ENCODE measurements at regions of chr20 and their contacts with region 1.

Region 1: DNA sequence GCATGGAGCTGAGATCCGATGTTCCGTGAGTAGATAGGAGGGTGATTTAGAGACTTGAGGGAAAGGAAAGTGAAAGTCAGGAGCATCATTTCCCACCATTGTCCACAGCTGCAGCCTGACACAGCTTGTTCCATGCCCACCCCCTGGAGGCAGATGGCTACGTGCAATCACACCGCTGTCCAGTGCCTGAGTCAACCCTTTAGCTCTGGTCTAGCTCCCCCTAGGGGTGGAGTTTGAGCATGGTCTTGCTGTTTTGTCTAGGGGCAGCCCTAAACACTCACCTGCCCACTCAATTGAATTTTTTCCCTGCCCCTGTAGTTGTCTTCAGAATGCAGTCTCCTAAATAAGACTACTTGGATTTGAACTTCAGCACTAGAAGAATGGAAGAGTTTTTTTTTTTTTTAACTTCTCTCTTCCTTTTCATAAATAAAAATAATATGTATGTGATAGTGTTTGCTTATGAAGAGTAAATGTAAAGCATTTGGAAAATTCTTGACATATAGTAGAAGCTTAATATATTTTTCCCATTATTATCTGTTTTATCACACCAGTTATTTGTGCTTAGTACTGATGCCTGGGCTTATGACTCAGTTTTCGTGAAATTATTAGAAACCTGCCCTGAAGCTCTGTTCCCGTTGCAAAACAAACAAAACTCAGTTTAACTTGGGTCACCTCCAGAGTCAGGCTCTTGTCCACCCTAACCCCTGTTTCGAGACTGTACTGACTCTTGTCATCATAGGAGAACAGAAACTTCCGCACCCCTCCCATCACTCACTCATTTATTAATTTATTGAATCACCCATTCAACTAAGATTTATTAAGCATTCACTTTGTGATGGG is 814.8 kb downstream of the MAFB start:
- ATAC-seq: peak; percentile 49 to 100 (median 83)
- H3K4me3 ChIP-seq: no peak overlapping the region
- H3K27ac ChIP-seq: no peak overlapping the region
- H3K4me1 ChIP-seq: peaks cover 24 to 27% of the 10 kb centered on the region in 2 donors

Region 2: DNA sequence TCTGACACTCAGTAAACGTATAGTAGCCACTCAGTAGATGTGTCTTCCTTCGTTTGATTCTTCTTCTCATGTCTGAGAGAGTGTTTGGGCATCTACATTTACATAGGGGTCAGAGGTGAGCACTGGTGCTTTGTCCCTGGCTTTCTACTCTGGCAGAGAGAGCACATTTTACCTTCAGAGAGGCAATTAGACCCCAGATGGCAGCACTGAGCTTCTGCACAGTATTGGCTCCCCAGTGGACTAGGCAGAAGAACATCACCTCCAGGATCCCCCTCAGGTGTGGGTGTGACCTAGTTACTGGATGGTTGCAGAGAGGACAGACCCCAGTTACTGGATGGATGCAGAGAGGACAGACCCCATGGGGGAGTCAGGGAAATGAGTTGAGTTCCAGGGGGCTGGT is 585.0 kb before region 1 on chr20:
- in situ Hi-C with region 1: loop called in 1 of 9 experiments (anchors 25 kb)
- ATAC-seq: peak in 3 of 8 experiments; percentile 35 to 67 (median 40)
- H3K4me3 ChIP-seq: no peak overlapping the region
- H3K27ac ChIP-seq: no peak overlapping the region
- H3K4me1 ChIP-seq: peaks cover 2 to 8% of the 10 kb centered on the region in 2 donors

Region 3: DNA sequence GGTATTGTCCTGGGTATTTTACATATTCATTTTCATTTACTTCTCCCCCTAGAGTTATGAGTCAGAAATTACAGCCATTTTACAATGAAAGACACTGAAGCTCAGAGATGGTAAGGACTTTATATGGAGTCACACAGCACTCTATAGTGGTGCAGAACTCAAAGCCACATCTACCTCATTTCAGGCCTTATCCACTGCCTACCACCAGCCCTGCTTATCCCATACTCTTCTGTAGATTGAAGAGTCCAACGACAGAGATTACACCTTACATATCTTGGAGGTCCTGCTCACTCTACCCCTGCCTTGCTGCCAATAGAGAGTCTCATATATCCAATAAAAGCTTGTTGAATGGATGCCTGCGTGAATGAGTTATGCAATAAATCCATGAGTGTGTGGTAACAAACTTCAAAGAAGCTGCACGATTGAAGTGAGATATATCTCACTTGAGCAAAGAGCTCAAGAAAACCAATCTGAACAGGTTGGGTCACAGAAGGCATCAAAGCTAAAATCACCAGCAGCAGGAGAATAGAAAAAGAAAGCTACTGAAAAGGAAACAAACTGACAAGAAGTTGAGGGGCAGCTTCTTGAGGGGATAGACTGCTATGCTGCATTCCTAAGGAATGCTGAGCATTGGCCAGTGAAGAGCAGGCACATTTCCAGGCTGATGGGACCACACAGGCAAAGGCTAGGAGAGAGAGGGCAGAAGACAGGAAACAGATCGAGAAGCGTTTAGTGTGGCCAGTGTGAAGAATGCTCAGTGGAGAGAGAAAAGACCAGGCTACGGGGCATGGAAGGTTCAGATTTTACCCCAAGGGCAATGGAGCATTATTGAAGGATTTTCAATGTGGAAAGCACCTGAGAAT is 326.5 kb before region 1 on chr20:
- in situ Hi-C with region 1: loop called in 1 of 9 experiments (anchors 25 kb)
- ATAC-seq: peak in 2 of 8 experiments; percentile 20 to 27
- H3K4me3 ChIP-seq: no peak overlapping the region
- H3K27ac ChIP-seq: no peak overlapping the region
- H3K4me1 ChIP-seq: peaks cover 10 to 12% of the 10 kb centered on the region in 2 donors

Region 4: GRCh38 chr20:39676857-39677391 is 197.3 kb before region 1 on chr20:
- in situ Hi-C with region 1: loop called in 1 of 9 experiments (anchors 25 kb)
- ATAC-seq: peak in 4 of 8 experiments; percentile 25 to 95 (median 56)
- H3K4me3 ChIP-seq: no peak overlapping the region
- H3K27ac ChIP-seq: no peak overlapping the region
- H3K4me1 ChIP-seq: peaks cover 0 to 6% of the 10 kb centered on the region in 2 donors